Heart right ventricle (tissue), 16 donors: ENCODE measurements at regions of chr5 and their contacts with region 1.

Region 1: DNA sequence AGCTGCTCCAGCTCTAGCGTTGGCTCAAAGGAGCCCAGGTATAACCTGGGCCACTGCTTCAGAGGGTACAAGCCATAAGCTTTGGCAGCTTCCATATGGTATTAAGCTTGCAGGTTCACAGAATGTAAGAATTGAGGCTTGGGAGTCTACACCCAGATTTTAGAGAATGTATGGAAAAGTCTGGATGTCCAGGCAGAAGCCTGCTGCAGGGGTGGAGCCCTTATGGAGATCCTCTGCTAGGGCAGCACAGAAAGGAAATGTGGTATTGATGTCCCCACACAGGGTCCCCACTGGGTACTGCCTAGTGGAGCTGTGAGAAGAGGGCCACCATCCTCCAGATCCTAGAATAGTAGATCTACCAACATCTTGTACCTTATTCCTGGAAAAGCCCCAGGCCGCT is 626.9 kb downstream of the MAT2B start:
- DNase-seq: no peak
- ATAC-seq: no peak
- H3K4me3 ChIP-seq: no peak overlapping the region
- H3K27ac ChIP-seq: no peak overlapping the region
- H3K4me1 ChIP-seq: no peaks in the 10 kb centered on the region
- H3K27me3 ChIP-seq: no peaks in the 10 kb centered on the region
- CTCF ChIP-seq: no peak

Region 2: DNA sequence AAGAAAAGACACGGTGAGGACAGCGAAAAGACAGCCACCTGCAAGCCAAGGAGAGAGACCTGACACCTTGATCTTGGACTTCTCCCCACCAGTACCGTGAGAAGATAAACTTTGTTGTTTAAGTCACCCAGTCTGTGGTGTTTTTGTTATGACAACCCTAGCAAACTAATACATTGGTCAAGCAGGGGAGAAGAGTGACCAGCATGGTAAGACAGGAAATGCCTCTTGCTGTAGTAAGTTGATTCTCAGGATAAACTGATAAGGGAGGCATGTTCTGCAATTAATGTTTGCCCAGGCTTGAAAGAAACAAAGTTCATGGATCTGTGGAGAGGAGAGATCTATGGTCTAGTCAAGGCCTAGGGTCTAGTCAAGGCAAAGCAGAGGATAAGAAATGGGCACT is 174.3 kb after region 1 on chr5:
- intact Hi-C with region 1: loop called in 1 of 10 experiments (anchors 5 kb)
- DNase-seq: no peak
- ATAC-seq: no peak
- H3K4me3 ChIP-seq: no peak overlapping the region
- H3K27ac ChIP-seq: no peak overlapping the region
- H3K4me1 ChIP-seq: no peaks in the 10 kb centered on the region
- H3K27me3 ChIP-seq: no peaks in the 10 kb centered on the region
- CTCF ChIP-seq: no peak